GM10248 (cell line): ENCODE measurements at regions of chr15 and their contacts with region 1.

Region 1: DNA sequence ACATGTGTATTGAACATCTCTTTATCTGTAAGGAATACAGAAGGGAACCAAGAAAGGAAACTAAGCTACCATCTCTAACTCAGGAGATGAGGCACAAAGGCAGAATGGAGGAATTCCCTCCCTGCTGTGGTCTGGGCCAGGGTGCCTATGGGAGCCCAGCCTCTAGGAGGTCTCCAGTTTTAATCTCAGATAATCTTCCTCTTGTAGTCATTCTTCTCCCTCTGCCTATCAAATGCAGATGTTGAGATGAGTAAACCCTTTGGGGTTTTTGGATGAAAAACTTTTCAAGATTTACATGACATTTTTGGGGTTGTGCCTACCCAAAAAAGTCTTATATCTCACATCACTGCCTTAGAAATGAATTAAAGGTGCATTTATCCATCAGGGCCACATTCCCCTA is 23.3 kb downstream of the SCG5 start:
- DNase-seq: no peak
- CTCF ChIP-seq: no peak

Region 2: GRCh38 chr15:32641517-32642059 is 23.2 kb before region 1 on chr15 and contains the start of gene SCG5:
- CTCF ChIA-PET with region 1: interaction called, 80 read pairs
- POLR2A ChIA-PET with region 1: no interaction called
- DNase-seq: no peak
- CTCF ChIP-seq: no peak

Region 3: DNA sequence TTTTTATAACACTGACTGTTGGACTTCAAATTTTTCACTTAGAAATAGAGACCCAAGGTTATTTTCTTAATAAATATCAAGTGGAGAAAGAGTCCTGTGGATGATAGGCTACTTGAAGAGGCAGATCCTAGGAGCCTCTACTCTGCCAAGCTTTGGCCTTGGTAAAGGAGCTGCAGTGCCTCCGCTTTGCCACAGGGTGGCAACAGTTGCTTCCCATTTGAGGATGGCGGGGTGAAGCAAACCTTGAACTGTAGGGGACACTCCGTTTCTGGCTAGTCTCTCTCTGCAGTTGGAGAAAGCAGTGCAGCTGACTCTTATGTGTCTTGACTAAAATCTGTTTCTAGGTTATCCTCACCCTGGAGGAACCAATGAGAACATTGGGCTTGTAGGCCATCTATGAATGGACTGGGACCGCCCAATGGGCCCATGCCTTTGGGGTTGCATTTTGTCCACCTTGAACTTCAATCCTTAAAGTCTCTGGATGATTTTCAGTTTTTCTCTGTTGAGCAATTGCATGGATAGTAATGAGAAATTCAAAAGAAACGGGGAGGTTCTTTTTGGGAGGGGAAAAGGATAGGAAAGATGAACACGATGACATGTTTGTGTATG is 13.5 kb before region 1 on chr15:
- CTCF ChIA-PET with region 1: interaction called, 80 read pairs
- POLR2A ChIA-PET with region 1: no interaction called
- DNase-seq: peak; percentile 81
- CTCF ChIP-seq: peak; percentile 85

Region 4: GRCh38 chr15:32685576-32685975 is 20.8 kb after region 1 on chr15:
- CTCF ChIA-PET with region 1: interaction called, 13 read pairs
- POLR2A ChIA-PET with region 1: no interaction called
- DNase-seq: no peak
- CTCF ChIP-seq: no peak

Region 5: DNA sequence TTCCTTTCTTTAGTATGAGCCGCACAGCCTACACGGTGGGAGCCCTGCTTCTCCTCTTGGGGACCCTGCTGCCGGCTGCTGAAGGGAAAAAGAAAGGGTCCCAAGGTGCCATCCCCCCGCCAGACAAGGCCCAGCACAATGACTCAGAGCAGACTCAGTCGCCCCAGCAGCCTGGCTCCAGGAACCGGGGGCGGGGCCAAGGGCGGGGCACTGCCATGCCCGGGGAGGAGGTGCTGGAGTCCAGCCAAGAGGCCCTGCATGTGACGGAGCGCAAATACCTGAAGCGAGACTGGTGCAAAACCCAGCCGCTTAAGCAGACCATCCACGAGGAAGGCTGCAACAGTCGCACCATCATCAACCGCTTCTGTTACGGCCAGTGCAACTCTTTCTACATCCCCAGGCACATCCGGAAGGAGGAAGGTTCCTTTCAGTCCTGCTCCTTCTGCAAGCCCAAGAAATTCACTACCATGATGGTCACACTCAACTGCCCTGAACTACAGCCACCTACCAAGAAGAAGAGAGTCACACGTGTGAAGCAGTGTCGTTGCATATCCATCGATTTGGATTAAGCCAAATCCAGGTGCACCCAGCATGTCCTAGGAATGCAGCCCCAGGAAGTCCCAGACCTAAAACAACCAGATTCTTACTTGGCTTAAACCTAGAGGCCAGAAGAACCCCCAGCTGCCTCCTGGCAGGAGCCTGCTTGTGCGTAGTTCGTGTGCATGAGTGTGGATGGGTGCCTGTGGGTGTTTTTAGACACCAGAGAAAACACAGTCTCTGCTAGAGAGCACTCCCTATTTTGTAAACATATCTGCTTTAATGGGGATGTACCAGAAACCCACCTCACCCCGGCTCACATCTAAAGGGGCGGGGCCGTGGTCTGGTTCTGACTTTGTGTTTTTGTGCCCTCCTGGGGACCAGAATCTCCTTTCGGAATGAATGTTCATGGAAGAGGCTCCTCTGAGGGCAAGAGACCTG is 66.2 kb after region 1 on chr15:
- CTCF ChIA-PET with region 1: no interaction called
- POLR2A ChIA-PET with region 1: no interaction called
- DNase-seq: no peak
- CTCF ChIP-seq: no peak

Region 6: DNA sequence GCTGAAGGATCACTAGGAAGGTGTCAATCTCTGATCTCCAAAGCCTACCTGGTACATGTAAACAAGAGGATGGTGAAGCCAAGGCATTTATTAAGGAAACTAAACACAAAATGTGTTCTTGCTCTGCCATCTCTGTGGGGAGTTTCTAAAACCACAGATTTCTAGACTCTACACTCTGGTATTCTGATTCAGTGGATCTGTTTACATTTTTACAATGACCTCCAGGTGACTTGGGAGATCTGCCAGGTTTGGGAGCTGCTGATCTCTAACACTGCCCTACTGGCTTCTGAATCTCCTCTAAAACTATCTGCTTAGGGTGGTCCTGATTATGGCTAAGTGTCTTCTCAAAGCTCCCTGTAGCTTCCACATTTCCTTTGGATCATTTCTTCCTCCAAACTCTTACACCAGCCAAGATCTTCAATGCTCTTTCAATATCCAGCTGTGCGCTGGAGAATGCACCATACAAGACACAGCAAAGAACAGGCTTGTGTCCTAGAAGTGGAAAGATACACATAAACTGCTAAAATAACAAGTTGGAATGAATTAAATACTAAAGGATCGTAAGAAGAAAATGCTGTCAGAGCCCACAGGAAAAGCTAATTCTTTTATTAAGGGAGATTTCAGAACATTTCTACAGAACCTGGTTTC is 125.7 kb after region 1 on chr15:
- CTCF ChIA-PET with region 1: no interaction called
- POLR2A ChIA-PET with region 1: no interaction called
- DNase-seq: no peak
- CTCF ChIP-seq: no peak

Region 7: DNA sequence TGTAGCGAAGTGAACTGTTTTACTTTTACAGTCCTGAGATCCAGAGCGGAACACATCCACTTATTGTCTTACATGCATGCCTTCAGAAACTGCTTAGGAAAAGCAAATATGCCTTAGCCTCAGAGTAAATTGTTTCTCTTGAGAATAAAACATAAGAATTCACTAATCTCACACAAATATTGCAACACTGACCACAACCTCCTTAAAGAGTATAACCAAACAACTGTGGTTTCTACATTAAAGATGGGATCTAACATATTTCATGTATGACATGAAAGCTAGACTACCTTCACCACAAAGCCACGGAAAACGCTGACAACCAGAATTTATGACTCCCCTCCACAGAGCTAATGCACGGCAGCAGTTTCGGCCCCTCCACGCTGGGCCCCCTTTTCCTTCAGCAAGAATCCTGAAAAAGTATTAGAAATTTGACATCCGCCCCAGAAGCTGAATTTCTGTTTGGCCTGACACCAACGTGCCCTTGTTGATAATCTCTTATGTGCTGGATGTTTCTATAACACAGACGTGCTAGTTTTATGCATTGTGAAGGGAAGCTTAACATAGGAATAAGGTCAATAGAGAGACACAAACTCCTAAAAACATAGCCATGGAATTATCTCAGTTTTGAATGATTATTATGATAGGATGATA is 137.6 kb after region 1 on chr15:
- CTCF ChIA-PET with region 1: no interaction called
- POLR2A ChIA-PET with region 1: no interaction called
- DNase-seq: no peak
- CTCF ChIP-seq: no peak

Region 8: GRCh38 chr15:32899126-32899596 is 234.4 kb after region 1 on chr15:
- CTCF ChIA-PET with region 1: no interaction called
- POLR2A ChIA-PET with region 1: no interaction called
- DNase-seq: no peak
- CTCF ChIP-seq: no peak

Region 9: GRCh38 chr15:32936283-32936918 is 271.6 kb after region 1 on chr15:
- CTCF ChIA-PET with region 1: interaction called, 20 read pairs
- POLR2A ChIA-PET with region 1: no interaction called
- DNase-seq: peak; percentile 22
- CTCF ChIP-seq: peak; percentile 25

Region 10: GRCh38 chr15:32956006-32956405 is 291.2 kb after region 1 on chr15:
- CTCF ChIA-PET with region 1: interaction called, 13 read pairs
- POLR2A ChIA-PET with region 1: no interaction called
- DNase-seq: peak; percentile 40
- CTCF ChIP-seq: peak; percentile 36